Activated CD4-positive, alpha-beta T cell treated with anti-CD3 and anti-CD28 coated beads, Interleukin-2, amount 10 ng/mL, durations not matched to agents 24 days and 14 days (primary cell): ENCODE measurements at regions of chr2 and their contacts with region 1.

Region 1: DNA sequence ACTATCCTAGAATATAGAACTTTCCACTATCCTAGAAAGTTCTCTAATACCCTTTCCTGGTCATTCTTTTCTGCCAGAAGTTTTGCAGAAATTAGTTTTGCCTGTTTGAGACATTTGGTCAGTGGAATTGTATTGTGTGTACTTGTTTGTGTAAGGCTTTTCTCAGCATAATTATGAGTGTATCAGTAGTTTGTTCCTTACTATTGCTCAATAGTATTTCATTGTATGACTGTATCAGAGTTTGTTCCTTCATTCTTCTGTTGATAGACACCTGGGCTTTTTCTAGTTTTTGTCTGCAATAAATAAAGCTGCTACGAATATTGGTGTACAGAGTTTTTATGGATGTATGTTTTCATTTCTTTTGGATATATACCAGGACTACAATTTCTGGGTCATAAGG is 27.2 kb downstream of the CCDC138 start:
- DNase-seq: no peak
- H3K4me3 Mint-ChIP-seq: no peak overlapping the region
- H3K27ac Mint-ChIP-seq: no peak overlapping the region
- H3K4me1 Mint-ChIP-seq: peaks cover 2% of the 10 kb centered on the region
- H3K27me3 Mint-ChIP-seq: no peaks in the 10 kb centered on the region

Region 2: GRCh38 chr2:108351889-108352288 is 461.8 kb before region 1 on chr2:
- intact Hi-C with region 1: no loop called
- DNase-seq: no peak
- H3K4me3 Mint-ChIP-seq: no peak overlapping the region
- H3K27ac Mint-ChIP-seq: no peak overlapping the region
- H3K4me1 Mint-ChIP-seq: no peaks in the 10 kb centered on the region
- H3K27me3 Mint-ChIP-seq: peaks cover 12% of the 10 kb centered on the region

Region 3: DNA sequence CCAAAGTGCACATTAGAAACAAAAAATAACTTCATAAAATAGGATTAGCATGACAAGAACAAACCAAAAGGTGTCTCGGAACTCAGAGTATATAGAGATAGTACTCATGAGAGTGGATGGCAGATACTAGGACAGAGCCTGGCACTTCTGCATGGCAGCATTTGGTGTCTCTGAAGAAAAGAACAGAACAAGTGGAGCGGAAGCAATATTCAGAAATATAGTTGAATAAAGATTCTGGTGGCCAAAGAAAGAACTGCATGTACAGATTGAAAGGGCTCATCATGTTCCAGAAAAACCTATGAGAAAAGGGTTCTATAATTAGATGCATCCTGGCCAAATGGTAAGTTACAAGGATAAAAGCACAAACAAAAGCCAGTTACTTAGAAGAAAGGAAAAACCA is 63.8 kb after region 1 on chr2:
- intact Hi-C with region 1: loop called (anchors 2 kb)
- DNase-seq: no peak
- H3K4me3 Mint-ChIP-seq: no peak overlapping the region
- H3K27ac Mint-ChIP-seq: no peak overlapping the region
- H3K4me1 Mint-ChIP-seq: no peaks in the 10 kb centered on the region
- H3K27me3 Mint-ChIP-seq: no peaks in the 10 kb centered on the region

Region 4: GRCh38 chr2:108971661-108972566 is 158.2 kb after region 1 on chr2:
- intact Hi-C with region 1: no loop called
- DNase-seq: no peak
- H3K4me3 Mint-ChIP-seq: no peak overlapping the region
- H3K27ac Mint-ChIP-seq: no peak overlapping the region
- H3K4me1 Mint-ChIP-seq: peaks cover 10% of the 10 kb centered on the region
- H3K27me3 Mint-ChIP-seq: no peaks in the 10 kb centered on the region